ENCODE measurements at regions of chr17 and their contacts with region 1.

Region 1: GRCh38 chr17:72602517-72603419 is 481.9 kb downstream of the SOX9 start:
- DNase-seq: peak; percentile 87
- H3K4me3 ChIP-seq: no peak overlapping the region
- H3K27ac ChIP-seq: peak overlapping the region; percentile 9
- H3K4me1 ChIP-seq: peaks cover 23% of the 10 kb centered on the region
- H3K27me3 ChIP-seq: no peaks in the 10 kb centered on the region
- CTCF ChIP-seq: peak; percentile 28 to 43

Region 2: DNA sequence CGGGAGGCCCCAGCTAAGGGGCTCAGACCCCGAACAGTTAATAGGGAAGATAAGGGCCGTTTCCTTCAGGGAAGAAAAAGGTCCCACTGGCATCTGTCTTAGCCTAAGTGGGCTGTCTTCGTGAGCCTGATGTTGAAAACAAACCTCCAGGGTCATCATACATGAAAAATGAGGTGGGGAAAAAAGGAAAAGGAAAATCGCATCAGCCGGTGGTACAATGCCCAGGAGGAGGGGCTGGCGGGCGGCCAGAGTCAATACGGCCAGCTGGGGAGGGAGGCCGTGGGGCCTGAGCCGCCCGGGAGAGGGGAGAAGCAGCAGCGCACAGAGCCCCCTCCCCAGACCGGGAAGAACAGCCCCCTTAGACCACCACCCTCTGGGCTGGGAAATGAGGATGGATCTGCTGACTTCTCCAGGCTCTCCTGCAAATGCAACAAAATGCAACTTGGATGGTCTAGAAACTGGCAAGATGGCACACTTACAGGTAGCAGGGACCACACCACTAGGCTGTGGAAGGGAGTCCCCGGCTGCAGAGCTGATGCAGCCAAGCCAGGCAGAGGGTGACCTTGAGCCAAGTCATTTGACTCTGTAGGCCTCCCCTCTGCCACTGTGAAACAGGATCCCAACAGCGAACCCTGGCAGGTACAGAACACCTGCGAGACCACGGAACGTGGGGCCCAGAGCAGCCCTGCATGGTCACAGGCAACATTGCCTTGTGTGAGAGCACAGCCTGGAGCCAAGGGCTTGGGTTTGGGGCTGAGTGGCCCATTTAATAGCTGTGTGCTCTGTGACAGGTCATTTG is 33.4 kb before region 1 on chr17:
- CTCF ChIA-PET with region 1: no interaction called
- dilution Hi-C with region 1: no loop called
- in situ Hi-C with region 1: no loop called
- intact Hi-C with region 1: no loop called
- DNase-seq: no peak
- H3K4me3 ChIP-seq: no peak overlapping the region
- H3K27ac ChIP-seq: no peak overlapping the region
- H3K4me1 ChIP-seq: peaks cover 11% of the 10 kb centered on the region
- H3K27me3 ChIP-seq: no peaks in the 10 kb centered on the region
- CTCF ChIP-seq: no peak

Region 3: GRCh38 chr17:72618001-72618509 is 15.3 kb after region 1 on chr17:
- CTCF ChIA-PET with region 1: no interaction called
- dilution Hi-C with region 1: no loop called
- in situ Hi-C with region 1: no loop called
- intact Hi-C with region 1: no loop called
- DNase-seq: no peak
- H3K4me3 ChIP-seq: no peak overlapping the region
- H3K27ac ChIP-seq: no peak overlapping the region
- H3K4me1 ChIP-seq: peaks cover 52% of the 10 kb centered on the region
- H3K27me3 ChIP-seq: no peaks in the 10 kb centered on the region
- CTCF ChIP-seq: no peak

Region 4: GRCh38 chr17:72654706-72655355 is 52.1 kb after region 1 on chr17:
- CTCF ChIA-PET with region 1: no interaction called
- dilution Hi-C with region 1: loop called (anchors 5 kb)
- in situ Hi-C with region 1: no loop called
- intact Hi-C with region 1: no loop called
- DNase-seq: no peak
- H3K4me3 ChIP-seq: no peak overlapping the region
- H3K27ac ChIP-seq: no peak overlapping the region
- H3K4me1 ChIP-seq: peaks cover 16% of the 10 kb centered on the region
- H3K27me3 ChIP-seq: no peaks in the 10 kb centered on the region
- CTCF ChIP-seq: no peak

Region 5: DNA sequence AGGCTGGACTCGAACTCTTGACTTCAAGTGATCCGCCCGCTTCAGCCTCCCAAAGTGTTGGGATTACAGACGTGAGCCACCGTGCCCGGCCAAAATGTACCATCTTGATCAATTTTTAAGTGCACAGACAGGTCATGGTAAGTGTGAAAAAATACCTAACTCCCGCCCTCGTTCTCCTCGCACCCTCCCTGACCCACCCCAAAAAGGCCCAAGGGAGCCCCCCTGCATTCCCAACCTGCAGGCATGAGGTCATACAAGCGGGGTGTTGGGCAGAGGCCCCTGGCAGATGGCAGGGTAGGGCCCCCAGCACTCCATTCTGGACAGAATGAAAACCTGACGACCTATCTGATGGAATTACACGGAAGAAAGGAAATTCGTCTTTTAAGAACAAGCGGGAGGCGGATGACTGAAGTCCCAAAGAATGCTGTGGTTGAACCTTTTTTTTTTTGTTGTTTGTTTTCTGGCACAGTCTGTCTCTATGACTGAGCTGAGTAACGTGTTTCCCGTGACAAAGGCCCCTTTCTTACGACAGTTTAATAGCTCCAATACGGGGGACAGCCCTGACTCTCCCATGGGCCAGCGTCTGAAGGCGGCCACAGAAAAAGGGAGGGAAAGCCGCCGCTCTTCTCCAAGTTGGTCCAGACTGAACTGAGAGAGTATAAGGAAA is 113.3 kb after region 1 on chr17:
- CTCF ChIA-PET with region 1: no interaction called
- dilution Hi-C with region 1: loop called (anchors 5 kb)
- in situ Hi-C with region 1: no loop called
- intact Hi-C with region 1: no loop called
- DNase-seq: peak; percentile 96
- H3K4me3 ChIP-seq: no peak overlapping the region
- H3K27ac ChIP-seq: peak overlapping the region; percentile 87
- H3K4me1 ChIP-seq: peaks cover 25% of the 10 kb centered on the region
- H3K27me3 ChIP-seq: no peaks in the 10 kb centered on the region
- CTCF ChIP-seq: no peak

Region 6: DNA sequence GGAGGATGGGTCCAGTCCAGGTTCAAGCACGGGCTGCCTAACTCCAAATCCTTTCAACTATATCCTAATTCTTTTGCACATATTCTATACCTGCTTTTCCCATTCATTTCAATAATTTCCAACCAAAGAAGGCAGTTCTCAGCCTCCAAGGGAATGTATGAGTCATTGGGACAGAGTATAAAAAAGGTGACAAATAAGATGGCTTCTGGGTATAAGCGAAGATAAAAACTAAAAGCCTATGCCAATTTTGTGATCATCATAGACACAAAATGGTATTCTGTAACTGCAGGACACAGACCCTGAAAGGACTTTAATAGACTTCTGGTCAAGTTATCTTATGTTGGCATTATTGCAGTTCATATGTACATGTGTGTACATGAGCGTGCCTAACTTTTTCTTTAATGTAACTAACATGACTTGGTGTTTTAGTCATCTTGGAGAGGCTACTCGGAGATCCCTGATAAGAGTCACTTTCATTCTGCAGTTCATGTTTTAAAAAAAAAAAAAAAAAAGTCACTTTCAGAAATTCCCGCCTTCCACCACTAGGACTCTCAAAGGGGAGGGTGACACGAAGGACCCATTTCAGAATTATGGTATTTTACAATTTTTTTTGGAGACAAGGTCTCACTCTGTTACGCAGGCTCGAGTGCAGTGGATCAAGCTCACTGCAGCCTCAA is 607.4 kb after region 1 on chr17:
- CTCF ChIA-PET with region 1: no interaction called
- dilution Hi-C with region 1: loop called (anchors 5 kb)
- in situ Hi-C with region 1: no loop called
- intact Hi-C with region 1: no loop called
- DNase-seq: no peak
- H3K4me3 ChIP-seq: no peak overlapping the region
- H3K27ac ChIP-seq: no peak overlapping the region
- H3K4me1 ChIP-seq: peaks cover 12% of the 10 kb centered on the region
- H3K27me3 ChIP-seq: no peaks in the 10 kb centered on the region
- CTCF ChIP-seq: peak; percentile 34 to 37